ENCODE measurements at regions of chr11 and their contacts with region 1.

Region 1: GRCh38 chr11:111878849-111879636 is at the starts of genes CFAP68 and FDXACB1:
- DNase-seq: peak; percentile 99
- total RNA-seq, gene CFAP68: 27.8 TPM
- total RNA-seq, gene FDXACB1: 0.73 TPM

Region 2: DNA sequence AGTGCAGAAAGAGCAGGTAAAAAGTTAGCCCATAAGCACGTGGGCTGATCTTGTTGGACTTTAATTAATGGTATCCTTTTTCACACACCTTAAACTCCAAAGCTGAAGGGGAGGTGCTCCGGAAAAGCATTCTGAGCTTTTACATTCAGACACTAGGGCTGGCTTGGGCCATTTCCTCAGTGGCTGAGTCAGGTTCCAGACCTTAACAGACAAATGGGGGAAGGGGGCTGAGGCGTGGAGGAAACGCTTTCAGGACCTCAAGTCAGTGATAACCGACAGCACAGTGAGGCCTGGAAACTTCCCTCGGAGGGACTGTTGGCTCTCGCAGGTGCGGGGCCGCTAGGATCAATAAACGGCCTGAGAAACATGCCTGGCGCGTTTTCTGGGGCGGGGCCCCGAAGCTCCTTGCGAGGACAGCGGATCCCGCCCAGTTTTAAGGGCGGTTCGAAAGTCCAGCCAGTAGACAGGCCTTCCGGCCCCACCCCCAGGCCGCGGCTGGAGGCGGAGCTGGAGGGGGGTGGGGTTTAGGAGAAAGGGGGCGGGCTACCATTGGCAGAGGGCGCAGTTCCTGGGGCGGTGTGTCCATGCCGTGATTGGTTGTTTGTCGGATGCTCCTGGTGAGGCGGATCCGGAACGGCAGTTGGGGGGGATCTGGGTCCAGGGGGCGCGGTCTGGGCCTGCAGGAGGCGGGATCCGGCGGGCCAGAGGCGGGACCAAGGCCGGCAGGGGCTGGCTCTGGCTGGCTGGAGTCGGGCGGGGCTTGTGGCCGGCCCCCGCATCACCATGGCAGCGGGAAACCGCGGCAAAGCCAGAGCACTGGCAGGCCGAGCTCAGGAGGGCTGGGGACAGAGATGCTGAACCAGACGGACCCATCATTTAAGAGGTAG is 47.7 kb after region 1 on chr11:
- intact Hi-C with region 1: loop called (anchors 5 kb)
- DNase-seq: peak; percentile 98

Region 3: GRCh38 chr11:111977146-111978027 is 98.3 kb after region 1 on chr11:
- intact Hi-C with region 1: loop called (anchors 2 kb)
- DNase-seq: peak; percentile 89

Region 4: GRCh38 chr11:111996129-111996528 is 117.1 kb after region 1 on chr11:
- intact Hi-C with region 1: loop called (anchors 5 kb)
- DNase-seq: no peak

Region 5: GRCh38 chr11:112074026-112074811 is 195.2 kb after region 1 on chr11 and contains the start of gene NKAPD1:
- intact Hi-C with region 1: loop called (anchors 5 kb)
- DNase-seq: peak; percentile 87
- total RNA-seq, gene NKAPD1: 9.7 TPM

Measured in cardiac septum (tissue), 1 donor.